ENCODE measurements at regions of chr1 and their contacts with region 1.

Region 1: GRCh38 chr1:206544562-206545257 is 37.4 kb downstream of the RASSF5 start:
- DNase-seq: peak; percentile 62 to 91 (median 80)
- ATAC-seq: peak; percentile 51 to 73 (median 66)
- H3K4me3 ChIP-seq: no peak overlapping the region
- H3K27ac ChIP-seq: no peak overlapping the region
- H3K4me1 ChIP-seq: peaks cover 14 to 16% (median 15%) of the 10 kb centered on the region in 3 donors
- H3K27me3 ChIP-seq: no peaks in the 10 kb centered on the region
- CTCF ChIP-seq: peak; percentile 73 to 84 (median 82)

Region 2: GRCh38 chr1:206583707-206584648 is 39.3 kb after region 1 on chr1:
- intact Hi-C with region 1: loop called in 2 of 3 experiments (anchors 5 kb)
- DNase-seq: peak in 5 of 6 donors; percentile 56 to 90 (median 76)
- ATAC-seq: peak; percentile 72 to 78 (median 74)
- H3K4me3 ChIP-seq: no peak overlapping the region
- H3K27ac ChIP-seq: peak overlapping the region in 1 of 4 donors; percentile 12
- H3K4me1 ChIP-seq: no peaks in the 10 kb centered on the region
- H3K27me3 ChIP-seq: no peaks in the 10 kb centered on the region
- CTCF ChIP-seq: peak; percentile 80 to 95 (median 89)

Region 3: GRCh38 chr1:206589206-206589605 is 44.5 kb after region 1 on chr1:
- intact Hi-C with region 1: loop called in 2 of 3 experiments (anchors 5 kb)
- DNase-seq: no peak
- ATAC-seq: peak in 3 of 4 donors; percentile 29 to 57 (median 52)
- H3K4me3 ChIP-seq: no peak overlapping the region
- H3K27ac ChIP-seq: no peak overlapping the region
- H3K4me1 ChIP-seq: no peaks in the 10 kb centered on the region
- H3K27me3 ChIP-seq: no peaks in the 10 kb centered on the region
- CTCF ChIP-seq: no peak

Region 4: GRCh38 chr1:206744683-206745082 is 200.0 kb after region 1 on chr1:
- intact Hi-C with region 1: no loop called
- DNase-seq: no peak
- ATAC-seq: peak in 1 of 4 donors; percentile 54
- H3K4me3 ChIP-seq: no peak overlapping the region
- H3K27ac ChIP-seq: no peak overlapping the region
- H3K4me1 ChIP-seq: no peaks in the 10 kb centered on the region
- H3K27me3 ChIP-seq: no peaks in the 10 kb centered on the region
- CTCF ChIP-seq: no peak

Measured in pancreas (tissue), 10 donors.